ENCODE measurements at regions of chr10 and their contacts with region 1.

Region 1: GRCh38 chr10:49625411-49625810 is 11.6 kb downstream of the CHAT start:
- DNase-seq: peak in 1 of 2 donors; percentile 27
- H3K4me3 ChIP-seq: no peak overlapping the region
- H3K27ac ChIP-seq: no peak overlapping the region
- H3K4me1 ChIP-seq: no peaks in the 10 kb centered on the region
- H3K27me3 ChIP-seq: peaks cover 0 to 8% of the 10 kb centered on the region in 2 donors
- CTCF ChIP-seq: no peak
- POLR2A ChIP-seq: no peak

Region 2: DNA sequence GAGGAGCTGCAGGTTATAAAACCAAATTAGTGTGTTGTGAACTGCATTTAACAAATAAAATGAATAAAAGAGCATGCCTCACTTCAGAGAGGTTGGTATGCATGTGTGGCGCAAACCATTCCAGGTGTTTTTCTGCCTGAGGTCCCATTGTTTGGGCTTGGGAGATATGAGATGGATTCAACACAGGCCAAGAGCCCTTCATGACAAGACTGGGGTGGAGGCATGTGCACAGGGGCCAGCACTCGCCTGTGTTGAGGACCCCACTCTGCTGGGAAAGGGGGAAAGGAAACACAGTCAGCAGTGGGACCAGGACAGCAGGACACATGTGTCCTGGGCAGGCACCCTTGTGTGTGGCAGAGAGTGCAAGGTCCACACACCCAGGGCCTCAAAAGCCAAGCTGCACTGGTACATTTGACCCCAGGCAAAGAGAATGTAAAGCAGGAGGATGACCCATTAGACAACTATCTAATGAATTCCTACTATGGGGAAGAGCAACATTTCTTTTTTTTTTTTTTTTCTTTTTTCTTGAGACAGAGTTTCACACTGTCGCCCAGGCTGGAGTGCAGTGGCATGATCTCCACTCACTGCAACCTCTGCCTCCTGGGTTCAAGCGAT is 24.5 kb before region 1 on chr10:
- intact Hi-C with region 1: loop called (anchors 1 kb)
- DNase-seq: no peak
- H3K4me3 ChIP-seq: no peak overlapping the region
- H3K27ac ChIP-seq: no peak overlapping the region
- H3K4me1 ChIP-seq: no peaks in the 10 kb centered on the region
- H3K27me3 ChIP-seq: peaks cover 0 to 46% of the 10 kb centered on the region in 2 donors
- CTCF ChIP-seq: no peak
- POLR2A ChIP-seq: no peak

Measured in breast epithelium (tissue), 4 donors.